B cell (primary cell): ENCODE measurements at regions of chr3 and their contacts with region 1.

Region 1: GRCh38 chr3:183725387-183725786 is 27.8 kb downstream of the YEATS2 start:
- DNase-seq: no peak
- ATAC-seq: no peak
- H3K4me3 ChIP-seq: no peak overlapping the region
- H3K4me3 Mint-ChIP-seq: no peak overlapping the region
- H3K27ac ChIP-seq: no peak overlapping the region
- H3K27ac Mint-ChIP-seq: no peak overlapping the region
- H3K4me1 ChIP-seq: no peaks in the 10 kb centered on the region
- H3K4me1 Mint-ChIP-seq: no peaks in the 10 kb centered on the region
- H3K27me3 ChIP-seq: no peaks in the 10 kb centered on the region
- H3K27me3 Mint-ChIP-seq: no peaks in the 10 kb centered on the region
- CTCF ChIP-seq: no peak

Region 2: DNA sequence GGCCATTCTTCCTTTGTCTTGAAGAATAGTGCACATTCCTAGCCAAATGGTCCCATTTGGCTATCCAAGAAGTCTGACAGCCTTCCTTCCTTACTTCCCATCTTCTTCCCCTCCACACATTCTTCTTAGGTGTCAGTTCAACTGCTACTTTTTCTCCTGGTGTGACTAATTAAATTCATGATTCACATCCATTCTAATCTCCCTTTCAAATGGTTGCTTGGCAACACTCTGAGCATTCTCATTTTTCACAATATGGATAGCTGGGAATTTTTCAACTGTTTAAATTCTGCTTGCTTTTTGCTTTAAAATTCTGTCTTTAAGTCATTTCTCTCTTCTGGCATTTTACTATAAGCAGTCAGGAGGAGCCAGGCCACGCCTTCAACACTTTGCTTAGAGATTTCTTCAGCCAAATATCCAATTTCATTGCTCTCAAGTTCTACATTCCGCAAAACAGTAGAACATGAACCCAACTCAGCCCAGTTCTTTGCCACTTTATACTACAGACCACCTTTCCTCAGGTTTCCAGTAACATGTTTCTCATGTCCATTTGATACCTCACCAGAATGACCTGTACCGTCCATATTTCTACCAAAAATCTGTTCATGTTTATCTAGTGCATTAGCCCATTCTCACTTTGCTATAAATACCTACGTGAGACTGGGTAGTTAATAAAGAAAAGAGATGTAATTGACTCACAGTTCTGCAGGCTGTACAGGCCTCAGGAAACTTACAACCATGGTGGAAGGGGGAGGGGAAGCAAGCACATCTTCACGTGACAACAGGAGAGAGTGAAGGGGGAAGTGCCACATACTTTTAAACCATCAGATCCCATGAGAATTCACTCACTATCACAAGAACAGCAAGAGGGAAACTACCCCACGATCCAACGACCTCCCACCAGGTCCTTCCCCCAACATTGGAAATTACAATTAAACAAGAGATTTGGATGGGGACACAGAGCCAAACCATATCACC is 265.0 kb before region 1 on chr3:
- CTCF ChIA-PET with region 1: no interaction called
- POLR2A ChIA-PET with region 1: no interaction called
- intact Hi-C with region 1: no loop called
- DNase-seq: peak; percentile 52
- ATAC-seq: peak; percentile 85
- H3K4me3 ChIP-seq: no peak overlapping the region
- H3K4me3 Mint-ChIP-seq: peak overlapping the region; percentile 3
- H3K27ac ChIP-seq: no peak overlapping the region
- H3K27ac Mint-ChIP-seq: peak overlapping the region; percentile 15
- H3K4me1 ChIP-seq: peaks cover 4% of the 10 kb centered on the region in 2 donors
- H3K4me1 Mint-ChIP-seq: peaks cover 9% of the 10 kb centered on the region
- H3K27me3 ChIP-seq: no peaks in the 10 kb centered on the region
- H3K27me3 Mint-ChIP-seq: no peaks in the 10 kb centered on the region
- CTCF ChIP-seq: no peak

Region 3: DNA sequence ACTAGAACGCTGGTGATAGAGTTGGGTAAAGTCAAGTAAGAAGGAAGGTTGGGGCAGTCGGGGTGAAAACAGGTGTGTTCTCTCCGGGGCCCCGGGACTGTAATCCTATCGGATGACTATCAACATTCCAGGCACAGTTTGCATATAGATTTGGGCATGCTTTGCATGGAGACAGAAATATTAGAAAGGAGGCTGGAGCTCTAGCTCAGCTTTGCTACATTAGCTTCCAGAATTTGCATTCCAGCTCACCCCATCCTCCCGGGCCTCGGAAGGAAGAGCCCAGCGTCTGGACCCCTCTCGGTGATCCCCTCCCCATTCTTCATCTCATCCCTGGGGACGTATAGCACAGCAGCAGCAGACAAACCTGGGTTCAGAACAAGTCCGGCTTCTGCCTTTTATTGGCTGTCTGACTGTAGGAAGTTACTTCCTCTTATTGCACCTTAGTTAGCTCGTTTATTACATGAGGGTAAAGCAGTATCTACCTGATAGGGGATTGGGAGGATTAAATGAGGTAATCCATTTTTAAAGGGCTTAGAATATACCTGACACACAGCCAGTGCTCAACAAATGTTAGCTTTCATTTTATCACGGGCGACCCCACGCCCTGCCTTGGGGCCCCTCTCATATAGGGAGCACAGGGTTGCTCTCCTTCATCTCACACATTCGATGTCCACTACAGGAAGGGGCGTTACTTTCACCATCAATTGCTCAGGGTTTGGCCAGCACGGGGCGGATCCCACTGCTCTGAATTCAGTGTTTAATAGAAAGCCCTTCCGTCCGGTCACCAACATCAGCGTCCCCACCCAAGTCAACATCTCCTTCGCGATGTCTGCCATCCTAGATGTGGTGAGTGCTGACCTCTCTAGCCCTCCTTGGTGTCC is 374.7 kb after region 1 on chr3:
- CTCF ChIA-PET with region 1: no interaction called
- POLR2A ChIA-PET with region 1: interaction called, 10 read pairs
- intact Hi-C with region 1: no loop called
- DNase-seq: no peak
- ATAC-seq: no peak
- H3K4me3 ChIP-seq: no peak overlapping the region
- H3K4me3 Mint-ChIP-seq: no peak overlapping the region
- H3K27ac ChIP-seq: no peak overlapping the region
- H3K27ac Mint-ChIP-seq: no peak overlapping the region
- H3K4me1 ChIP-seq: peaks cover 0 to 3% of the 10 kb centered on the region in 2 donors
- H3K4me1 Mint-ChIP-seq: no peaks in the 10 kb centered on the region
- H3K27me3 ChIP-seq: peaks cover 0 to 2% (median 0%) of the 10 kb centered on the region in 4 experiments
- H3K27me3 Mint-ChIP-seq: peaks cover 3% of the 10 kb centered on the region
- CTCF ChIP-seq: no peak